Mammary epithelial cell (primary cell): ENCODE measurements at regions of chr12 and their contacts with region 1.

Region 1: DNA sequence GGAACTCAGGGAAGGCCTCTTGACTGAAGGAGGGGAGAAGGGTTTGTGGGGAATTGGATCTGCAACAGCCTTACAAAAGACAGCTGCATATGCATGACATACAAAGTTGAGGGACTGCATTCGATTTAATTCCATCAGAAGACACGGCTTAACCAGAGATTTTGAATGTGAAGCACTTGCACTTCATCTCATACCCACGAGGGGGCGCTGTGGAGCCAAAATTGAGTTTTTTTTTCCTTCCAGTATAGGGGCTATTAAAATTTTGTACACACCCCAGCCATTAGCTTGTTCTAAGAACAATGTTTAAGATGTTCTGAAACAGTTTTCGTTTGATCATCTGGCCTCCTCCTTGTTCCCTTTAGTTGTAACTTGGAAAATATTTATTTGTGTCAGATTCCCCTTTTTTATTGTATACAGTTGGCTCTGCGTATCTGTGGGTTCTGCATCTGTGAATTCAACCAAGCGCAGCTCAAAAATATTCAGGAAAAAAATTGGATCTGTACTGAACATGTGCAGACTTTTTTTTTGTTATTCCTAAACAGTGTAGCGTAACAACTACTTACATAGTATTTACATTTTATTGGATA is 1.6 kb downstream of the SUDS3 start:
- DNase-seq: peak; percentile 46
- H3K4me3 ChIP-seq: peak overlapping the region; percentile 76 to 89 (median 79)
- H3K27ac ChIP-seq: no peak overlapping the region
- H3K4me1 ChIP-seq: peaks cover 26% of the 10 kb centered on the region
- H3K27me3 ChIP-seq: no peaks in the 10 kb centered on the region
- CTCF ChIP-seq: peak; percentile 80 to 85

Region 2: GRCh38 chr12:117850048-117850447 is 527.9 kb before region 1 on chr12:
- CTCF ChIA-PET with region 1: interaction called, 15 read pairs
- dilution Hi-C with region 1: no loop called
- in situ Hi-C with region 1: no loop called
- intact Hi-C with region 1: no loop called
- DNase-seq: peak; percentile 16
- H3K4me3 ChIP-seq: no peak overlapping the region
- H3K27ac ChIP-seq: no peak overlapping the region
- H3K4me1 ChIP-seq: no peaks in the 10 kb centered on the region
- H3K27me3 ChIP-seq: no peaks in the 10 kb centered on the region
- CTCF ChIP-seq: peak; percentile 83 to 96

Region 3: GRCh38 chr12:118120579-118121363 is 257.2 kb before region 1 on chr12:
- CTCF ChIA-PET with region 1: interaction called, 29 read pairs
- dilution Hi-C with region 1: no loop called
- in situ Hi-C with region 1: no loop called
- intact Hi-C with region 1: loop called (anchors 1 kb)
- DNase-seq: peak; percentile 40
- H3K4me3 ChIP-seq: no peak overlapping the region
- H3K27ac ChIP-seq: no peak overlapping the region
- H3K4me1 ChIP-seq: peaks cover 3% of the 10 kb centered on the region
- H3K27me3 ChIP-seq: no peaks in the 10 kb centered on the region
- CTCF ChIP-seq: peak; percentile 37 to 64

Region 4: DNA sequence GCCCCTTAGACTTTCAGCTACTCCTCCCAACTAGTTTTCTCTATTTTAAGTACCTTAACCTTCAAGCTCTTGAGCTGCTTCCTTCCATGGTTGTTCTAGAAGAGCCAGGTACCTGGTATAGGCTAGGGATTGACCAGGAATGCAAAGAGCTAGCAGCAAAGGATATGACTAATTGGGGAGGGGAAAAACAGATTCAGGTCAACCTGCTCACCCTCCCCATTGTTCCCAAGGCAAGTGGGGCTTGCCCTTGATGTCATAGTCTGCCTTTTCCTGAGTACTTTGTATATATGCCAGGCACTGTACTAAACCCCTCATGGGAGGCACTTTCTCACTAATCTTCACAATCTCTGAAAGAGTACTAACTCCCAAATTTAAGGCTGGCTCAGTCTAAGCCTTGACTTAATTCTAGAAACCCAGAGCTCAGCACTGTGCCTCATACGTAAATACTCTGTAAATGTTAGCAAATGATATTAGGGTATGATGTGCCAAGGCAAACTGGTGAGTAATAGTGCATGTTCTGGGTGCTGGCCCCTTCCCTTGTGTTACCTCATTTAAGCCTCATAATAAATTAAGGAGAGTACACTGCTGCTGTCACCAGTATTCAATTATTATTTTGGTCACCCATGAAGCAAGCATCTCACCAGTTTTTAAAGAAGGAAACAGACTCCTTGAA is 40.5 kb after region 1 on chr12:
- CTCF ChIA-PET with region 1: no interaction called
- dilution Hi-C with region 1: no loop called
- in situ Hi-C with region 1: no loop called
- intact Hi-C with region 1: no loop called
- DNase-seq: peak; percentile 64
- H3K4me3 ChIP-seq: no peak overlapping the region
- H3K27ac ChIP-seq: peak overlapping the region; percentile 6
- H3K4me1 ChIP-seq: peaks cover 15% of the 10 kb centered on the region
- H3K27me3 ChIP-seq: no peaks in the 10 kb centered on the region
- CTCF ChIP-seq: no peak